ENCODE measurements at regions of chr6 and their contacts with region 1.

Region 1: DNA sequence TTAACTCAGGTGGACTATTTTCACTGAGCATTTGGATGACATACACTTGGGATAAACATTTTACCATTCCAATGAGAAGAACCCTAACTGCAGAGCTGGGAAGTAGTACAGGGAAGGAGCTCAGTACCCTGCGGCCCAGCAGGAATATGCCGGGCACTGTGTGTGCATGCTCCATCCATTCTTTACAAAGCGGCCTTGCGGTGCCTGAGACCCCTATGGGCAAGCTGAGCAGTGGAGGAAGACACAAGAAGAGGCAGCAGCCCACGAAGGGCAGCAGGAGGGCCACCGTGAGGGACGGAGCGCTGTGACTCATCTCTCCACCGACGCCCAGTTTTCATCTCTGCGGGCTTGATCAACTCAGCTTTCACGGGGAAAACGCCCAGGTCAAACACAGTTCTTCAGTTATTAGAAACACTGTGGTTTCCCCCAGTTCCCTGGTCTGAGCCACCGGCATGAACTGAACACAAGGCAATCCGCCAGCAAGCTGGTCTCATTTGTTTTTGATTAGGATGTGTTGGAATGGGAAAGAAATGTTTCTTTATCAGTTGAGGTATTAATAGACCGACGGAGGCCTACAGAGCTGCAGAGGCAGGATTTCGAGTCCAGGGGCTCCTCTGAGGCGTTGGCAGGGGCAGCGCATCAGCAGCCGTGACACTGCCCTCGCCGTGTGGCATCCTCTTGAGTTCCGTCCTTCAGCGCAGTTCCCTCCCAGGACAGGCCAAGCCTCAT is 44.9 kb downstream of the IRF4 start:
- DNase-seq: no peak
- ATAC-seq: no peak
- H3K4me3 Mint-ChIP-seq: no peak overlapping the region
- H3K27ac Mint-ChIP-seq: peak overlapping the region; percentile 12
- H3K4me1 Mint-ChIP-seq: peaks cover 34% of the 10 kb centered on the region
- H3K27me3 Mint-ChIP-seq: no peaks in the 10 kb centered on the region

Region 2: DNA sequence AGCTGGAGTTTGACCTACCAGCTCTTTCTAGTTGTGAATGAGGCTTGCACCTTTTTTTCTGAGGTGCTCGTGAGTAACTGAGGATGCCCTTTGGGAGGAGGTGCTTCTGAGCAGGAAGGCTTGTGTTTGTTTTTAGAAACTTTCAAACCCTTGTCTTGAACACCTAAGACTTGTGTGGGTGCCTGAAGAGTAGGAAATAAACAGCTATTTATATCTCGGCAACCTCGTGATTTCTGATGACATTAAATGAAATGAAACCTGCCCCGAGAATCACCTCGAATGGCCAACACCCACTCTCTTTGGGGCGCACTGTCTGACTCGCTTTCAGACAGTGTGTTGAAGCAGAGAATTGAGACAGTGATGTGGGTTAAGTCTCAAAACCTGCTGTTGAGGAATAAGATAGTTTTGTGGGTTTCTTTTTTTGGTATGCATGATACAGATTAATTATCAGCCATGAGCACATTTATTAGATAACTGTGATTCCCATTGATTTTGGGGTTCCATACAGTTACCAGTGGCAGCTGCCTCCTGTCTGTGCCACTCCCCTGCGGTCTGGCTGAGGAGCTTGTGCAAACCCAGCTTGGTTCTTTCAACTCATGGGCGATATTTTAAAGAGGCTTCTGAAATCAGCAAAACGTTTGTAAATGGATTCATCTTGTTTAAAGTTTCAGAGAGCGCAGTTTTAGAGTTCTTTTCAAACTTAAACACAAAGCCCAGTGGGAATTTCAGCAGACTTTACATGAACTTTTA is 36.5 kb before region 1 on chr6:
- POLR2A ChIA-PET with region 1: interaction called, 14 read pairs
- DNase-seq: no peak
- ATAC-seq: peak; percentile 38
- H3K4me3 Mint-ChIP-seq: peak overlapping the region; percentile 53
- H3K27ac Mint-ChIP-seq: peak overlapping the region; percentile 70
- H3K4me1 Mint-ChIP-seq: peaks cover 86% of the 10 kb centered on the region
- H3K27me3 Mint-ChIP-seq: no peaks in the 10 kb centered on the region

Region 3: DNA sequence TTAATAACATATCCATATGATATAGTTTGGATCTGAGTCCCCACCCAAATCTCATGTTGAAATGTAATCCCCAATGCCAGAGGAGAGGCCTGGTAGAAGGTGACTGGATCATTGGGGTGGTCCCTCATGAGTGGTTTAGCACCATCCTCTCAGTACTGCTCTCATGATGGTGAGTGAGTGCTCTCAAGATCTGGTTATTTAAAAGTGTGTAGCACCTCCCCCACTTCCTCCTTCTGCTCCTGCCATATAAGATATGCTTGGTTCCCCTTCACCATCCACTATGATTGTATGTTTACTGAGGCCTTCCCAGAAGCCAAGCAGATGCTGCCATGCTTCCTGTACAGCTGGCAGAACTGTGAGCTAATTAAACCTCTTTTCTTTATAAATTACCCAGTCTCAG is 22.0 kb before region 1 on chr6:
- POLR2A ChIA-PET with region 1: no interaction called
- DNase-seq: no peak
- ATAC-seq: no peak
- H3K4me3 Mint-ChIP-seq: no peak overlapping the region
- H3K27ac Mint-ChIP-seq: no peak overlapping the region
- H3K4me1 Mint-ChIP-seq: peaks cover 10% of the 10 kb centered on the region
- H3K27me3 Mint-ChIP-seq: no peaks in the 10 kb centered on the region

Region 4: DNA sequence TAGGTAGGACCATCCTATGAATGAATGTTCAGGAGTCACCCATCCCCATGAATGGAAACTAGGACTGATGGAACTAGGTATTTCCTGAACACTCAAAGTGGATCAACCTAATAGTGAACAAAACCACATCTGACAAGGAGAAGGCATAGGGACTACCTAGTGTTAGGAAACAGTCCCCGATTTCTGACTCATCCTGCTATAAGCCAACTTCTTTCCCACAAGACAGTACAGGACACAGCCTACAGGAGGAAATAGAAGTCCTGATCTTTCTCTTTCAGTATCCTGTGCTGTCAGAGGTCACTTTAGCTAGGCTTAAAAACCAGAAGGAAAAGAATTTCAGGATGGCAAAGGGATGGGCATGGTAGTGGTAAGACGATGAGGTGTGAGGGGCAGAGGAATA is 1828.5 kb after region 1 on chr6:
- POLR2A ChIA-PET with region 1: no interaction called
- DNase-seq: no peak
- ATAC-seq: no peak
- H3K4me3 Mint-ChIP-seq: no peak overlapping the region
- H3K27ac Mint-ChIP-seq: no peak overlapping the region
- H3K4me1 Mint-ChIP-seq: no peaks in the 10 kb centered on the region
- H3K27me3 Mint-ChIP-seq: no peaks in the 10 kb centered on the region